ENCODE measurements at regions of chr5 and their contacts with region 1.

Region 1: GRCh38 chr5:38193015-38193581 is 65.3 kb upstream of the EGFLAM start:
- DNase-seq: peak in 1 of 2 experiments; percentile 81
- H3K4me3 ChIP-seq: no peak overlapping the region
- H3K27ac ChIP-seq: no peak overlapping the region
- H3K4me1 ChIP-seq: no peaks in the 10 kb centered on the region
- H3K27me3 ChIP-seq: peaks cover 51% of the 10 kb centered on the region
- CTCF ChIP-seq: peak; percentile 98

Region 2: DNA sequence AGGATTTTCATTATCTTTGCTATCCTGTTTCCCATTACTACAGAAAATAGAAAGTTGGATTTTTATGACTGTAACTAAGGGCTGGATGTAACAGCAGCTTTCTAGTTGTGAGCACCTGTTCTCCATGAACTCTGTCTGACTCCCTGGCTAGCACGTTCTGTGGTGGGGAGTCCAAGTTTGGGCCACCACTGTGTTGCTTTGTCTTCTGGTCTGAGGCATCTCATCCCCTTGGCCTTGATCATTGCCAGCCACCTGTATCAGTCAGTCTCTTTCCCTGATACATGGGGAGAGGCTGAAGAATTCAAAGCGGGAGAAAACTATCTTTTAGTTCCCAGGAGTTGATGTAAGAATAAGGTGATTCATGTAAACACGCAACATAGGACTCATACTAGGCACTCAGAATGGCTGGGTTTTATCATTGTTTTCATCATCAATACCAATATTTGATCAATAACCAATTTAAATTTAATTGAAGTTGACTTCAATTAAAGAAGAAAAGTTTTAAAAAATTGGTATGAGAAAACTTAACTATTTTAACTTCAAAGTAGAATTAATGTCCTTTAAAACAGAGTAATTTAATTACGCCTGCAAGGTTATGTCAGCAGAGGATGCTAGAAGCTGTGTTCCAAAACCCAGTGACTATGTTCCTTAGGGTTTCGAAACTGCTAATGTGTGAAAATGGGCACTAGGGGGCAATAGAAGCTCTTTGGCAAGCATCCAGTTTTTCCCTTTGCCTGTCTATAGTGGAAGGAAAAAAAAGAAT is 780.4 kb before region 1 on chr5:
- CTCF ChIA-PET with region 1: interaction called, 23 read pairs
- POLR2A ChIA-PET with region 1: no interaction called
- intact Hi-C with region 1: loop called (anchors 1 kb)
- DNase-seq: peak; percentile 72 to 79
- H3K4me3 ChIP-seq: no peak overlapping the region
- H3K27ac ChIP-seq: no peak overlapping the region
- H3K4me1 ChIP-seq: no peaks in the 10 kb centered on the region
- H3K27me3 ChIP-seq: no peaks in the 10 kb centered on the region
- CTCF ChIP-seq: peak; percentile 99

Region 3: DNA sequence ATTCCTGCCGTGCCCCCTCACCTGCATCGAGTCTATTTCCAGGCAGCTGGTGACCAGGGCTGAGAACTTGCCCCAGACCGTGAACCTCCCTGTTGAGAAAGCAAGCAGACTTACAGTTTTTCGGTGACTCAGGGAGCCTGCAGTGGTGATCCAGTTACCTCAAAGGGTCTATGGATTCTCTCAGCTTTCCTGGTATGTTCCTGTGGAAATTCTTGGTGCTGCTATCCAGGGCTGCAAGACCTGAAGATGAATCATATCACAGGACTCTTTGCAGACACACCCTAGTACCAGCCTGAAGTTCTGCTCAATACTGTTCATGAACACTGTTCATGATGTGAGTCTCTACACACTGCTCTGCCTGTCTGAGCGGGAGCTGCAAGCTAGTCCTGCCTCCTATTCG is 659.2 kb before region 1 on chr5:
- CTCF ChIA-PET with region 1: no interaction called
- POLR2A ChIA-PET with region 1: no interaction called
- intact Hi-C with region 1: loop called (anchors 10 kb)
- DNase-seq: peak; percentile 68 to 77
- H3K4me3 ChIP-seq: no peak overlapping the region
- H3K27ac ChIP-seq: peak overlapping the region; percentile 21
- H3K4me1 ChIP-seq: peaks cover 8% of the 10 kb centered on the region; the same call in 1 of the 2 replicates
- H3K27me3 ChIP-seq: no peaks in the 10 kb centered on the region
- CTCF ChIP-seq: no peak

Region 4: GRCh38 chr5:37774912-37775483 is 418.1 kb before region 1 on chr5:
- CTCF ChIA-PET with region 1: no interaction called
- POLR2A ChIA-PET with region 1: no interaction called
- intact Hi-C with region 1: loop called (anchors 10 kb)
- DNase-seq: no peak
- H3K4me3 ChIP-seq: no peak overlapping the region
- H3K27ac ChIP-seq: no peak overlapping the region
- H3K4me1 ChIP-seq: peaks cover 26% of the 10 kb centered on the region
- H3K27me3 ChIP-seq: no peaks in the 10 kb centered on the region
- CTCF ChIP-seq: peak; percentile 92

Region 5: DNA sequence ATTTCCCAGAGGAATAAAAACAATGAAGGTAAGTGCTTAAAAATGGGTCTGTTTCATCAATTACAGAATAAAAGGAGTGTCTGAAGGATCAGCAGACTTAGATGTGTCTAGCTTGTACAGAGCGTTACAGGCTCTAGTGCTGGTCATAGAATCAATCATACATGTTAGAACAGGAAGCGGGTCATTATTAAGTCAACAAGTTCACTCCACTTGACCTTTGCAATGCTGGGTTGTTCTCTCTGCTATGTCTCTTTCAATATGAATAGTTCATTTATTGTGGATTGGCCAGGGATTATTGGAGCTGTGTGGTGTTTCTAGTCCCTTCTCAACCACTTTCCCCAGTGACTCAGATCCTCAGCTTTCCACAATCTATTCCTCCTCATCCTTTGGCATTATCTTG is 44.6 kb after region 1 on chr5:
- CTCF ChIA-PET with region 1: no interaction called
- POLR2A ChIA-PET with region 1: no interaction called
- intact Hi-C with region 1: no loop called
- DNase-seq: no peak
- H3K4me3 ChIP-seq: no peak overlapping the region
- H3K27ac ChIP-seq: no peak overlapping the region
- H3K4me1 ChIP-seq: no peaks in the 10 kb centered on the region
- H3K27me3 ChIP-seq: peaks cover 37% of the 10 kb centered on the region
- CTCF ChIP-seq: no peak

Region 6: GRCh38 chr5:38373743-38374142 is 180.6 kb after region 1 on chr5:
- CTCF ChIA-PET with region 1: no interaction called
- POLR2A ChIA-PET with region 1: no interaction called
- intact Hi-C with region 1: no loop called
- DNase-seq: no peak
- H3K4me3 ChIP-seq: no peak overlapping the region
- H3K27ac ChIP-seq: no peak overlapping the region
- H3K4me1 ChIP-seq: no peaks in the 10 kb centered on the region
- H3K27me3 ChIP-seq: peaks cover 98% of the 10 kb centered on the region
- CTCF ChIP-seq: no peak

Measured in PC-9 (cell line).